HepG2 (cell line): ENCODE measurements at regions of chr10 and their contacts with region 1.

Region 1: GRCh38 chr10:77846718-77847630 is 79.6 kb downstream of the DLG5 start:
- DNase-seq: peak; percentile 53
- ATAC-seq: peak; percentile 51
- H3K4me3 ChIP-seq: no peak overlapping the region
- H3K27ac ChIP-seq: peak overlapping the region; percentile 26
- H3K4me1 ChIP-seq: peaks cover 85% of the 10 kb centered on the region
- H3K27me3 ChIP-seq: no peaks in the 10 kb centered on the region
- CTCF ChIP-seq: peak; percentile 94
- EP300 ChIP-seq: no peak
- POLR2A ChIP-seq: no peak
- RAD21 ChIP-seq: peak; percentile 93

Region 2: DNA sequence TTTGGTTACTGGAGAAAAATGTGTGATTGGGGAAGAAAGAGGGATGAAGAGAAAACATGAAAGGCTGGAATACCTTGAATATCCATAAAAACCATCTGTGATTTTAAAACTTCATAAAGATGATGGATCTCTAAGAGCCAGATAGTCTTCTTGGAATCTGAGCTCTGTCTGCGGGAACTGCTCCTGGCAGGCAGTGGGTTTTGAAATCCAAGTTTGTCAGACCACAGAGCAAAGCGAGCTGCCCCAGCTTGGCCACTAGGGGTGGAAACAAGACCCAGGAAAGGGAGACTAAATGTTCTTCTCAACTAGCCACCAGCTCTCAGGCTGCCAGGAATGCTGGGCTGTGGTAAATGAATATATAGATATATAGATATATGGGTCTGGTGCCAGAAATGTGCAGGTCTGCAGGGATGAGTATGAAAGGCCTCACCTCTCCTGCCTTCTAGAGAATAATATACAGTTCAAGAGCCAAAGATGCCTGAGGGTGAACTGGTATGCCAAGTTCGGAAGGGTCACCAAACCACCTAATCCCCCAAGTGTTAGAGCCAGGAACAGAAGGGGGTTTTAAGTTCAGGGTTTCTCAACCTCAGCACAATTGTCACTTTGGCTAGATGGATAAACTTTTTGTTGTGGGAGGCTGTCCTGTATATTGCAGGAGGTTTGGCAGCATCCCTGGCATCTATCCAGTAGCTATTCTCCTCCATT is 418.1 kb before region 1 on chr10:
- CTCF ChIA-PET with region 1: no interaction called
- POLR2A ChIA-PET with region 1: no interaction called
- in situ Hi-C with region 1: no loop called
- intact Hi-C with region 1: no loop called
- DNase-seq: peak; percentile 8
- ATAC-seq: peak; percentile 79
- H3K4me3 ChIP-seq: no peak overlapping the region
- H3K27ac ChIP-seq: no peak overlapping the region
- H3K4me1 ChIP-seq: no peaks in the 10 kb centered on the region
- H3K27me3 ChIP-seq: no peaks in the 10 kb centered on the region
- CTCF ChIP-seq: peak; percentile 29; the same call in 1 of the 2 replicates
- EP300 ChIP-seq: no peak
- POLR2A ChIP-seq: no peak
- RAD21 ChIP-seq: no peak

Region 3: DNA sequence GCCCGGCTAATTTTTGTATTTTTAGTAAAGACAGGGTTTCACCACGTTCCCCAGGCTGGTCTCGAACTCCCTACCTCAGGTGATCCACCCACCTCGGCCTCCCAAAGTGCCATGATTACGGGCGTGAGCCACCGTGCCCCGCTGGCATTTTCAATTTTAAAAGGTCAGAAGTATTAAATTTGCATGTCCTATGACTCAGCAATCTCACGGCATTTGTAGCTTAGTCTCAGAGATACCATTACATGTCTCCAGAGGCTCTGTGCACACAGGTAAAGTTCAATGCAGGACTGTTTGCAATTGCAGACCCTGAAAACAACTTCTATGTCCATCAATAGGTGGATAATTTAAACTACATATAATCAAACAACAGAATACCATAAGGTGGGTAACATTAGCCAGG is 19.6 kb before region 1 on chr10:
- CTCF ChIA-PET with region 1: no interaction called
- POLR2A ChIA-PET with region 1: no interaction called
- in situ Hi-C with region 1: no loop called
- intact Hi-C with region 1: no loop called
- DNase-seq: no peak
- ATAC-seq: no peak
- H3K4me3 ChIP-seq: no peak overlapping the region
- H3K27ac ChIP-seq: no peak overlapping the region
- H3K4me1 ChIP-seq: peaks cover 9% of the 10 kb centered on the region
- H3K27me3 ChIP-seq: no peaks in the 10 kb centered on the region
- CTCF ChIP-seq: no peak
- EP300 ChIP-seq: no peak
- POLR2A ChIP-seq: no peak
- RAD21 ChIP-seq: no peak

Region 4: GRCh38 chr10:77889277-77889903 is 42.4 kb after region 1 on chr10:
- CTCF ChIA-PET with region 1: no interaction called
- POLR2A ChIA-PET with region 1: interaction called, 9 read pairs
- in situ Hi-C with region 1: loop called (anchors 5 kb)
- intact Hi-C with region 1: loop called (anchors 1 kb)
- DNase-seq: peak; percentile 93
- ATAC-seq: peak; percentile 92
- H3K4me3 ChIP-seq: peak overlapping the region; percentile 22 to 60 (median 44); a peak in 4 of 6 replicates
- H3K27ac ChIP-seq: peak overlapping the region; percentile 83
- H3K4me1 ChIP-seq: peaks cover 95% of the 10 kb centered on the region
- H3K27me3 ChIP-seq: no peaks in the 10 kb centered on the region
- CTCF ChIP-seq: peak; percentile 44
- EP300 ChIP-seq: no peak
- POLR2A ChIP-seq: peak; percentile 65 to 77; a peak in 3 of 4 replicates
- RAD21 ChIP-seq: peak; percentile 36; the same call in 1 of the 2 replicates

Region 5: DNA sequence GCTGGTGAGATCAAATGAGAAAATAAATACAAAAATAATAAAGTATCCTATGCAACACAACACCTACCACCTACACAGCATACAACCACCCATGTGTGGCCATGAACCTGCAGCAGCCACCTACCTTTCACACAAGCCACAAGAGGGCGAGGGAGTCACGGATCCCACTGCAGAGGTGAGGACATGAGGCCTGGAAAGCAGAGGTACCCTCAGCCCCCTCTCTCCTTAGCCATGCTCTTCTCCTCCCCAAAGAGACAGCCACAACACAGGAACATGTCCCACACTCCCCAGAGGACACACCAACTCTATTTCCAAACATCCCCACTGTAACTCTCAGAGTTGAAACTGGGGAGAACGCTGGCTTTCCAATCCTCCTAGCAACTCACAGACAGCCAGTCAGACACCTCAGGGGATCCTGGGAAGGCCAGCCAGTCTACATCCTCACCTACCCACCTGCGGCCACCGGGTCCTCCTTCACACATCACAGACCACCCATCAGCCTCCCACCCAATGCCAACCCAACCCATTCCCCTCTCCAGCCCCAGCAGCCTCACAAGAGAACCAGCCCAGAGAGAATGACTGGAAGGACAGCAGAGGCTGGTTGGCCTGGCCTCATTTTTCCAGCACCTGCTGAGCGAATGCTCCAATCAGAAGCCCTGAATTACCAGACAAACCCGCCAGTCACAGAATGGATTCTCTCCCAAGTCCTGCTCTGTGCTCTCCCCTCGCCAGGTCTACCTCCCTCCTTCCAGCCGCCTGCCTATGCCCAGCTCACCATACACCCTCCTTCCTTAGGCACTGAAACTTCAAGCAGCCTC is 61.1 kb after region 1 on chr10:
- CTCF ChIA-PET with region 1: interaction called, 5 read pairs
- POLR2A ChIA-PET with region 1: interaction called, 8 read pairs
- in situ Hi-C with region 1: no loop called
- intact Hi-C with region 1: loop called (anchors 2 kb)
- DNase-seq: peak; percentile 65
- ATAC-seq: peak; percentile 82
- H3K4me3 ChIP-seq: no peak overlapping the region
- H3K27ac ChIP-seq: peak overlapping the region; percentile 86
- H3K4me1 ChIP-seq: peaks cover 94% of the 10 kb centered on the region
- H3K27me3 ChIP-seq: no peaks in the 10 kb centered on the region
- CTCF ChIP-seq: peak; percentile 79
- EP300 ChIP-seq: no peak
- POLR2A ChIP-seq: no peak
- RAD21 ChIP-seq: peak; percentile 76

Region 6: DNA sequence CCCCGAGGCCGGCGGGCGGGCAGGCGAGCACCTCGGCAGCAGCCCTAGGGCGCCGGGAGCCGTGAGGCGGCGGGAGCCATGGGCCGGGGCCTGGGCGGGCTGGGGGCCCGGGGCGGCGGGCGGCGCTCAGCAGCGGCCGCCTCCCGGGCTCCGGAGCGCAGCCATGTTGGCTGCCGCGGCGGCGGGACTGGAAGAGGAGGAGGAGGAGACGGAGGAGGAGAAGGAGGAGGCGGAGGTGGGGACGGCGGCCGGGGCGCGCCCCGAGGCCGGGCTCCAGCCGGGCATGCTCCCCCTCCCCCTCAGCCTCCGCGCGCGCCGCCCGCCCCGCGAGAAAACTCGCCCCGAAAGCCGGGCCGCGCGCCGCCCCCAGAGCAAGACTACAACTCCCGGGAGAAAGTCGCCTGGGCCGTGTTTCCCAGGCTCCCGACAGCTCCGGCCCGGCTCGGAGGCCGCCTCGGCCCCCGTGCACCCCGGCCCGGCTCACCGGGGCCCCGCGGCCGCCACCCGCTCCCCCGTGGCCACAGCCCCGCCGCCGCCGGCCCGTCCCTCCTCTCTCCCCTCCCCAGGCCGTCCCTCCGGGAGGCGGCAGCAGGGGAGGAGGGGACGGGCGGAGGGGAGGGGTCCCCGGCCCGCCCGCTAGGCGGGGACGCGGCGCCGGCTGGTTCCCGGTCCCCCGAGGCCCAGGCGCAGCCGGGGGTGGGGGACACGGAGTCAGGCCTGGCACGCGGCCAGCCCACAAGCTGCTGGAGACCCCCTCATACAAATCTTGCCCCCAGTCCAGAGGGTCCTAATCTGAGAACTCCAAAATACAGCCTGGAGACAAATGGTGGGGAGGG is 79.8 kb after region 1 on chr10 and contains the start of gene DLG5:
- CTCF ChIA-PET with region 1: interaction called, 5 read pairs
- POLR2A ChIA-PET with region 1: no interaction called
- in situ Hi-C with region 1: no loop called
- intact Hi-C with region 1: loop called (anchors 5 kb)
- DNase-seq: no peak
- ATAC-seq: peak; percentile 50
- H3K4me3 ChIP-seq: peak within 1 kb of the TSS; percentile 73 to 92 (median 89)
- H3K27ac ChIP-seq: peak within 1 kb of the TSS; percentile 57
- H3K4me1 ChIP-seq: peaks cover 54% of the 10 kb centered on the region
- H3K27me3 ChIP-seq: no peaks in the 10 kb centered on the region
- CTCF ChIP-seq: peak; percentile 30; the same call in 1 of the 2 replicates
- EP300 ChIP-seq: no peak
- POLR2A ChIP-seq: no peak
- RAD21 ChIP-seq: 0 out of 2 replicates have a peak, but pooled peaks have one; percentile 23
- total RNA-seq, gene DLG5: 15.1 and 15.5 TPM in 2 replicates

Region 7: DNA sequence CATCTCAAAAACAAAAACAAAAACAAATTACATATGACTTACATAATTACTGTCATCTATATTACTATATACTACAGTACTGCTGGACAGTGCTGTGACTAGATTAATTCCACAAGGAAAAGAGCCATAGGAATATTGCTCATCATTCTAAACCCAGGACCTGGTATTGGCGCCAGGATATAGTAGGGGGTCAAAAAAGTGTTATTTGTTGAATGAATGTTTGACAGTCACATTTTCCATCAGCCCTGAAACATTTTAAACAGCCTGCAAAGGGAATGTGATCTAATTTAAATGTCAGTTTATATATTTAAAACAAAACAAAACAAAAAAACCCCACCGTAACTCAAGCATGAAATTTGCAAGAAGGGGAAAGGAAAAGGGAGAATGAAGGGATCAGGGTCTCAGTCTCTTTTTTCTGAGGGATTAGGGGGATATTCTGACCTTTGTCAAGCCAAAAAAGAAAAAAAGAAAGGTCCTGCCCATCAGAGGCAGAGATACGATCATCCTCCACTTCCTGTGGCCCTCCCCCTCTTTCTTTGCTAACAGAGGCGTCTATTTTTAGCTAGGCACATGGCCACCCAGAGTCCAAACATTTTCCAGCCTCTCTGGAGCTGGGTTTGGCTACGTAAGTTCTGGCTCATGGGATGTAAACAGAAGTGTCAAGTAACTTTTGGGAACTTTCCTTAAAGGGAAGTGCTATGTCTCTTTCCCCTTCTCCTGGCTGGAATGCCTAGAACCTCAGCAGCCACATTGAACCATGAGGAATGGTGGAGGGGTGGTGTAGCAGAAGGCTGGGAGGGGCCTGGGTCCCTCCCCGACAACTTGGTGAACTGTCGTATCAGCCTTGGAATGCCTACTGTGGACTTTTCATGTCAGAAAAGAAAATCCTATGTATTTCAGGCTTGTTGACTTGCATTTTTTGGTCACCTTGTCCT is 124.2 kb after region 1 on chr10:
- CTCF ChIA-PET with region 1: interaction called, 5 read pairs
- POLR2A ChIA-PET with region 1: no interaction called
- in situ Hi-C with region 1: loop called (anchors 5 kb)
- intact Hi-C with region 1: loop called (anchors 2 kb)
- DNase-seq: peak; percentile 92
- ATAC-seq: peak; percentile 84
- H3K4me3 ChIP-seq: no peak overlapping the region; a peak in 1 of 6 replicates
- H3K27ac ChIP-seq: peak overlapping the region; percentile 62
- H3K4me1 ChIP-seq: peaks cover 78% of the 10 kb centered on the region
- H3K27me3 ChIP-seq: no peaks in the 10 kb centered on the region
- CTCF ChIP-seq: 0 out of 2 replicates have a peak, but pooled peaks have one; percentile 10
- EP300 ChIP-seq: peak in 1 of 2 experiments; percentile 84; a peak in 2 of 4 replicates
- POLR2A ChIP-seq: no peak
- RAD21 ChIP-seq: no peak

Region 8: GRCh38 chr10:77989081-77989724 is 142.2 kb after region 1 on chr10:
- CTCF ChIA-PET with region 1: no interaction called
- POLR2A ChIA-PET with region 1: interaction called, 6 read pairs
- in situ Hi-C with region 1: no loop called
- intact Hi-C with region 1: loop called (anchors 1 kb)
- DNase-seq: peak; percentile 94
- ATAC-seq: peak; percentile 99
- H3K4me3 ChIP-seq: peak overlapping the region in 1 of 3 experiments; percentile 17; a peak in 1 of 6 replicates
- H3K27ac ChIP-seq: peak overlapping the region; percentile 77
- H3K4me1 ChIP-seq: peaks cover 24% of the 10 kb centered on the region
- H3K27me3 ChIP-seq: no peaks in the 10 kb centered on the region
- CTCF ChIP-seq: 0 out of 2 replicates have a peak, but pooled peaks have one; percentile 12
- EP300 ChIP-seq: 0 out of 4 replicates have a peak, but pooled peaks of 1 of the 2 experiments have one; percentile 57
- POLR2A ChIP-seq: peak in 1 of 2 experiments; percentile 31; a peak in 1 of 4 replicates
- RAD21 ChIP-seq: peak; percentile 33; the same call in 1 of the 2 replicates

Region 9: DNA sequence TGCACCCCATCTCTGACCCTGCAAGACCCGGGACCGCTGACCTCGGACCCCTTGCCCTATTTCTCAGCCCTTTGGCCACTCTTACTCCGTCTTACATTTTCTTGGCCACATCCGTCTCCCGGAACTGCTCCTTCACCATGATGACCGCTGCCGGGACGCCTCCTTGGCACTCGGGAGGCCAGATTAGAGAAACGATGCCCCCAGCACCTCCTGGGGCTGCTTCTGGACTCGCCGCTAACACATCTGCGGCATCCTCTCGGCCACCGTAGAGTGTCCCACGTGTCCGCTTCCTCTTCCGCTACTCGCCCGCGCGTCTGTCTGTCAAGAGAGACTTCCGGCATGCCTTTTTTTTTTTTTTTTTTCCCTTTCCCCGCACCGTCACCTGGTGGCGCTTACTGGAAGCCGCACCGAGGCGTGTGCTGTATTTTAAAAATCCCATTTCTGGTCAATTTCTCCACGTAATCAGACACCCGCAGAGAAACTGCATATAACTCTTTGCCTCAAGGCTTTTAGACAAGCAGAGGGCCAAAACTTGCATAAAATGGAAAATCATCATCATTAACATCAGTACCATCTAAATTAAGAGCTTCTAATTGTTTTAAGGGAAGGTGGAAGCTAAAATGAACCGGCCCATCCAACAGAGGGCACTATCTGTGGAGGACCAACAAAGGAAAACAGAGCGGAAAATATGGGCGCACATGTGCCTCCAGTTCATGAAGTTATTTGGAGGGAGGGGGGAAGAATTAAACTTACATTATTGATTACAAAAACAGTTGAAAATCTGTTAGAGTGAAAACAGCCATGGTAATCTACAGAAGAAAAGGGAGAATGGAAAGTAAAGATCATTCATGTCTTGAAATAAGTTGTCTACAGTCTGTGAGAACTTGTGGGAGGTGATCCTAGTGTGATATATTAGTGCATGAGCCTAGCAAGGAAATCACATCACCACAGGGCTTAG is 182.6 kb after region 1 on chr10 and contains the start of gene POLR3A:
- CTCF ChIA-PET with region 1: interaction called, 11 read pairs
- POLR2A ChIA-PET with region 1: no interaction called
- in situ Hi-C with region 1: loop called (anchors 10 kb)
- intact Hi-C with region 1: loop called (anchors 1 kb)
- DNase-seq: peak; percentile 93
- ATAC-seq: peak; percentile 82
- H3K4me3 ChIP-seq: peak within 1 kb of the TSS; percentile 80 to 95 (median 81)
- H3K27ac ChIP-seq: peak within 1 kb of the TSS; percentile 95
- H3K4me1 ChIP-seq: peaks cover 24% of the 10 kb centered on the region
- H3K27me3 ChIP-seq: no peaks in the 10 kb centered on the region; a peak in 2 of 5 replicates
- CTCF ChIP-seq: peak; percentile 73
- EP300 ChIP-seq: no peak
- POLR2A ChIP-seq: peak; percentile 73 to 81
- RAD21 ChIP-seq: no peak; the same call in 1 of the 2 replicates
- total RNA-seq, gene POLR3A: 19.2 and 26.3 TPM in 2 replicates